GM12878 (cell line): ENCODE measurements at regions of chr10 and their contacts with region 1.

Region 1: DNA sequence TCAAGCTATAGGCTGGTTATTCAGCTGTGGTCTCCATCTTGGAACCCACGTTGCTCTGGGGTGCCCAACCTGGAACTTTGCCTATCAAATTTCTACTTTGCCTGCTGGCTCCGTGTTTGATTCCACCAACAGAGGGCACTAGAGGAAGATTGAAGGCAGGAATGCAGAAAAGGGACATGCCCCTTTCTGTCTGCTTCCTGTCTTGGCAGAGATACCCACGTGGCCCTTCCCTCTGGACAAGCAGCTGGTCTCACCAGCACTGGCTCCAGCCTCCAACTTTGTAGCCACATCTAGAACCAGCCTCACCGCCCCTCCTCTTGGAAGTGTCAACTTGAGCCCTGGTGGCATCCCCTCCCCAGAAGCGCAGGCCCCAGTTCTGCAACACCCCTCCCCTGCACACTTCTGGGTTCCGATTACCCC is 52.1 kb upstream of the ZNF438 start:
- DNase-seq: peak; percentile 26
- ATAC-seq: peak; percentile 87
- H3K4me3 ChIP-seq: no peak overlapping the region
- H3K27ac ChIP-seq: no peak overlapping the region
- H3K4me1 ChIP-seq: no peaks in the 10 kb centered on the region
- H3K27me3 ChIP-seq: no peaks in the 10 kb centered on the region
- CTCF ChIP-seq: peak; percentile 55 to 65 (median 62)
- EP300 ChIP-seq: no peak
- POLR2A ChIP-seq: no peak
- RAD21 ChIP-seq: peak; percentile 77

Region 2: DNA sequence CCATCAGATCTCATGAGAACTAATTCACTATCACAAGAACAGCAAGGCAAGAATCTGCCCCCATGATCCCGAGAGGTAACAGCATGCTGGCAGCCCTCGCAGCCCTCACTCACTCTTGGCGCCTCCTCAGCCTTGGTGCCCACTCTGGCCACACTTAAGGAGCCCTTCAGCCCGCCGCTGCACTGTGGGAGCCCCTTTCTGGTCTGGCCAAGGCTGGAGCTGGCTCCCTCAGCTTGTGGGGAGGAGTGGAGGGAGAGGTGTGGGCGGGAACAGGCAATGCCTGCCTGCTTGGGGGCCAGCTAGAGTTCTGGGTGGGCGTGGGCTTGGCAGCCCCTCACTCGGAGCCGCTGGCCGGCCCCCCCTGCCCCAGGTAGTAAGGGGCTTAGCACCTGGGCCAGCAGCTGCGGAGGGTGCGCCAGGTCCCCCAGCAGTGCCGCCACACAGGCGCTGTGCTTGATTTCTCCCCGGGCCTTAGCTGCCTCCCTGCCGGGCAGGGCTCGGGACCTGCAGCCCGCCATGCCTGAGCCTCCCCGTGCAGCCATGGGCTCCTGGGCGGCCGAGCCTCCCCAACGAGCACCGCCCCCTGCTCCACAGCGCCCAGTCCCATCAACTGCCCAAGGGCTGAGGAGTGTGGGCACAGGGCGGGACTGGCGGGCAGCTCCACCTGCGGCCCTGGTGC is 28.1 kb before region 1 on chr10:
- CTCF ChIA-PET with region 1: no interaction called
- POLR2A ChIA-PET with region 1: no interaction called
- RAD21 ChIA-PET with region 1: no interaction called
- SMC1A ChIA-PET with region 1: no interaction called
- in situ Hi-C with region 1: no loop called
- intact Hi-C with region 1: no loop called
- DNase-seq: no peak
- ATAC-seq: no peak
- H3K4me3 ChIP-seq: no peak overlapping the region
- H3K27ac ChIP-seq: no peak overlapping the region
- H3K4me1 ChIP-seq: no peaks in the 10 kb centered on the region
- H3K27me3 ChIP-seq: no peaks in the 10 kb centered on the region
- CTCF ChIP-seq: no peak
- EP300 ChIP-seq: no peak
- POLR2A ChIP-seq: no peak
- RAD21 ChIP-seq: no peak

Region 3: GRCh38 chr10:31101123-31101522 is 17.3 kb after region 1 on chr10:
- CTCF ChIA-PET with region 1: interaction called, 6 read pairs
- POLR2A ChIA-PET with region 1: interaction called, 3 read pairs
- RAD21 ChIA-PET with region 1: interaction called, 7 read pairs
- SMC1A ChIA-PET with region 1: interaction called, 41 read pairs
- in situ Hi-C with region 1: no loop called
- intact Hi-C with region 1: no loop called
- DNase-seq: peak; percentile 59
- ATAC-seq: peak; percentile 91
- H3K4me3 ChIP-seq: no peak overlapping the region
- H3K27ac ChIP-seq: no peak overlapping the region; the same call in 1 of the 2 replicates
- H3K4me1 ChIP-seq: peaks cover 14% of the 10 kb centered on the region
- H3K27me3 ChIP-seq: no peaks in the 10 kb centered on the region
- CTCF ChIP-seq: no peak
- EP300 ChIP-seq: peak; percentile 52 to 80; a peak in 3 of 4 replicates
- POLR2A ChIP-seq: no peak
- RAD21 ChIP-seq: no peak

Region 4: DNA sequence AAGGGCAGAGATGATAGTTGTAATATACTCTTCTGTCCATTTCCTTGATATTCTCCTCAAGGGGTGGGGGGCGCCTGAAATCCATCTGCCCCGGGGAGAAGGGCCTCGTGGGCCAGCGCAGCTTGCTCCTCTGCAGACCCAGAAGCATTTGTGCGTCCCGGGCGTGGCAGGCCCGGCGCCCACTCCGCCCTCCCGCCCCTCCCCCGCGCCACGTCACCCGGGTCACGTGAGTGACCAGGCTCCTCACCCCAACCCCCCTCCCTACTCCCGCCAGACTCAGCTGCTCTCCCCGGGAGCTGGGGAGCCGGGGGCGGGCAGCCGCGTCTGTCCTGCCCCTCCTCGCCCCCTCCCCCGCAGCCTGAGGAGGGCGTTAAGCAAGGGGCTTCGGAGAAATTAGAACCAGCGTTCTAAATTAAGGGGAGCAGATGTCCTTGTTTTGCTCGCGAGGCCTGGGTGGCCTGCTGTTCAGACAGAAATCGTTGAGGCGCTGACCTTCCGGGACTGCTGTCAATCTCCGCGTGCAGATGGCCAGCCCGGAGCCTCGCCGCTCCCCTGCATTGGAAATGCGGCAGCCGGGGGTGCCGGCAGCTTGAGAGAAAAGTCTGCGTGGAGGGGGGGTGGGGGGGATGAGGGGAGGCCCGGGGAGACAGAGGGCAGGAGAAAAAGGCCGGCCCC is 50.0 kb after region 1 on chr10:
- CTCF ChIA-PET with region 1: interaction called, 3 read pairs
- POLR2A ChIA-PET with region 1: no interaction called
- RAD21 ChIA-PET with region 1: interaction called, 3 read pairs
- SMC1A ChIA-PET with region 1: interaction called, 12 read pairs
- in situ Hi-C with region 1: no loop called
- intact Hi-C with region 1: no loop called
- DNase-seq: peak; percentile 26
- ATAC-seq: peak; percentile 84
- H3K4me3 ChIP-seq: peak overlapping the region; percentile 69; the same call in 1 of the 2 replicates
- H3K27ac ChIP-seq: peak overlapping the region; percentile 71
- H3K4me1 ChIP-seq: peaks cover 11% of the 10 kb centered on the region
- H3K27me3 ChIP-seq: no peaks in the 10 kb centered on the region
- CTCF ChIP-seq: no peak
- EP300 ChIP-seq: peak in 1 of 2 experiments; percentile 34; a peak in 1 of 4 replicates
- POLR2A ChIP-seq: peak; percentile 77
- RAD21 ChIP-seq: no peak

Region 5: DNA sequence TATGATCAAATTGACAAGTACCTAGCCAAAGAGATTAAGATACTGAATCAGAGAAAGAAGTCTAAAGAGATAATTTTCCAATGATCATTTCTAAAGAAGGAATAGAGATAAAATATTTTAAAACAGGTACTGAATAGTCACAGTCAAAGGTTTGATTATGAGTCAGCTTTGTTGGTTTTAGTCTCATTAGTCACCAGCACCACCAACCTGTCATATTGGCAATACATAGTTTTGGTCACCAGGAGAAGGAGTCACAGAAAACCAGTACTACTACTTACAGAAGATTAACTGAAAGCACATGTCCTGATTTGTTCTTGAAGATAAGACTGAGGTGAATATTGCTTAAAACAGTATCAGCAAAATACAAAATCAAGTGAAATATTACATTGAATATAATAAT is 269.8 kb after region 1 on chr10:
- CTCF ChIA-PET with region 1: interaction called, 9 read pairs
- POLR2A ChIA-PET with region 1: no interaction called
- RAD21 ChIA-PET with region 1: interaction called, 5 read pairs
- SMC1A ChIA-PET with region 1: interaction called, 18 read pairs
- in situ Hi-C with region 1: no loop called
- intact Hi-C with region 1: no loop called
- DNase-seq: peak; percentile 73
- ATAC-seq: peak; percentile 90
- H3K4me3 ChIP-seq: no peak overlapping the region
- H3K27ac ChIP-seq: no peak overlapping the region; the same call in 1 of the 2 replicates
- H3K4me1 ChIP-seq: peaks cover 25% of the 10 kb centered on the region
- H3K27me3 ChIP-seq: no peaks in the 10 kb centered on the region
- CTCF ChIP-seq: peak; percentile 31 to 55 (median 33); a peak in 4 of 6 replicates
- EP300 ChIP-seq: peak; percentile 61 to 66; a peak in 2 of 4 replicates
- POLR2A ChIP-seq: no peak
- RAD21 ChIP-seq: peak; percentile 57

Region 6: GRCh38 chr10:31490858-31491504 is 407.2 kb after region 1 on chr10:
- CTCF ChIA-PET with region 1: interaction called, 5 read pairs
- POLR2A ChIA-PET with region 1: no interaction called
- RAD21 ChIA-PET with region 1: interaction called, 10 read pairs
- SMC1A ChIA-PET with region 1: interaction called, 5 read pairs
- in situ Hi-C with region 1: no loop called
- intact Hi-C with region 1: no loop called
- DNase-seq: peak; percentile 28
- ATAC-seq: peak; percentile 83
- H3K4me3 ChIP-seq: no peak overlapping the region
- H3K27ac ChIP-seq: no peak overlapping the region
- H3K4me1 ChIP-seq: no peaks in the 10 kb centered on the region
- H3K27me3 ChIP-seq: no peaks in the 10 kb centered on the region
- CTCF ChIP-seq: peak; percentile 53 to 60 (median 53)
- EP300 ChIP-seq: no peak
- POLR2A ChIP-seq: no peak
- RAD21 ChIP-seq: peak; percentile 65

Region 7: GRCh38 chr10:31707093-31708039 is 623.6 kb after region 1 on chr10:
- CTCF ChIA-PET with region 1: no interaction called
- POLR2A ChIA-PET with region 1: no interaction called
- RAD21 ChIA-PET with region 1: no interaction called
- SMC1A ChIA-PET with region 1: no interaction called
- in situ Hi-C with region 1: no loop called
- intact Hi-C with region 1: no loop called
- DNase-seq: peak; percentile 90
- ATAC-seq: peak; percentile 93
- H3K4me3 ChIP-seq: peak overlapping the region; percentile 52
- H3K27ac ChIP-seq: peak overlapping the region; percentile 92
- H3K4me1 ChIP-seq: peaks cover 31% of the 10 kb centered on the region
- H3K27me3 ChIP-seq: no peaks in the 10 kb centered on the region
- CTCF ChIP-seq: no peak
- EP300 ChIP-seq: peak; percentile 80 to 88
- POLR2A ChIP-seq: no peak
- RAD21 ChIP-seq: peak; percentile 28; the same call in 1 of the 2 replicates